AG04449 (cell line): ENCODE measurements at regions of chr17 and their contacts with region 1.

Region 1: GRCh38 chr17:40480501-40481003 is 20.9 kb downstream of the TNS4 start:
- DNase-seq: no peak
- H3K4me3 ChIP-seq: no peak overlapping the region
- CTCF ChIP-seq: no peak

Region 2: DNA sequence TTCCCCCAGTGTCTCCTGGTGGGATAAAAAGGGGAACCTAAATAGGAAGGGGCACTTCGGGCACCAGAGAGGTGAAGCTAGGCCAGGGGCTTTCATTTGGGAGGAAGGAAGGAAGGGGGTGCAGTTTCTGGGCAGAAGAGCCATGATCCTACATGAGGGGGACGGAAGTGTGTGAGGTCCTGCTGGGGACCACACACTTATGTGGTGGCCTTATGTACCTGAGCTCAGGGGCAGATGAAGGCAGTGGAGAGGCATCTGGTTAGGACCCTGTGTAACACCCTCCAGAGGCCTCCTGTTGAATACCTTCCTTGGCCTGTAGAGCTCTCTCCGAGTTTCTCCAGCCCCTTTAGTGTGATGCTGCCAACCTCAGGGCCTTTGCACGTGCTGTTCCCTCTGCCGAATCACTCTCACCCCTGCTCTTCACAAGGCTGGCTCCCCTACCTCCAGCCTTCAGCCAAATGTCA is 16.1 kb before region 1 on chr17:
- CTCF ChIA-PET with region 1: interaction called, 49 read pairs
- POLR2A ChIA-PET with region 1: interaction called, 3 read pairs
- DNase-seq: no peak
- H3K4me3 ChIP-seq: no peak overlapping the region
- CTCF ChIP-seq: no peak

Region 3: GRCh38 chr17:40536295-40537171 is 56.0 kb after region 1 on chr17:
- CTCF ChIA-PET with region 1: interaction called, 140 read pairs
- POLR2A ChIA-PET with region 1: interaction called, 6 read pairs
- DNase-seq: no peak
- H3K4me3 ChIP-seq: no peak overlapping the region
- CTCF ChIP-seq: no peak

Region 4: DNA sequence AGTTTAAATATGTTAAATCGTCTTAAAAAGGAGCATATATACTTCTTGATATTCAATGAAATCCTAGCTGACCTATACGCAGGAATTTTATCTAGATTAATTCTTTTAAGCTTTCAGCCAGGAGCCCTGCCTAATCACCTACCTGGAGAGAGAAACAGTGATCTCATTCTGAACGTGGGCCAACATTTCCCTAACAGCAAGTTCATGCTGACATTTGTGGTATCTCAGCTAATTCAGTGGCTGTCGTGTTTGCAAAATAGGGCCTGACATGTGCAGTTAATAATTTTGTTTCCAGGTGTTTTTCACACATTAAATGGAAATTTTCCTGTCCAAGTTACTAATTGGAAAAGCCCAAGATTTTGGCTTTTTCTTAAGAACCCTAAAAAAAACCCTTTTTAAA is 205.6 kb after region 1 on chr17:
- CTCF ChIA-PET with region 1: no interaction called
- POLR2A ChIA-PET with region 1: no interaction called
- DNase-seq: no peak
- H3K4me3 ChIP-seq: no peak overlapping the region
- CTCF ChIP-seq: no peak